Posterior vena cava (tissue), 2 donors: ENCODE measurements at regions of chr15 and their contacts with region 1.

Region 1: GRCh38 chr15:84826369-84826823 is 9.2 kb downstream of the ALPK3 start:
- DNase-seq: no peak

Region 2: DNA sequence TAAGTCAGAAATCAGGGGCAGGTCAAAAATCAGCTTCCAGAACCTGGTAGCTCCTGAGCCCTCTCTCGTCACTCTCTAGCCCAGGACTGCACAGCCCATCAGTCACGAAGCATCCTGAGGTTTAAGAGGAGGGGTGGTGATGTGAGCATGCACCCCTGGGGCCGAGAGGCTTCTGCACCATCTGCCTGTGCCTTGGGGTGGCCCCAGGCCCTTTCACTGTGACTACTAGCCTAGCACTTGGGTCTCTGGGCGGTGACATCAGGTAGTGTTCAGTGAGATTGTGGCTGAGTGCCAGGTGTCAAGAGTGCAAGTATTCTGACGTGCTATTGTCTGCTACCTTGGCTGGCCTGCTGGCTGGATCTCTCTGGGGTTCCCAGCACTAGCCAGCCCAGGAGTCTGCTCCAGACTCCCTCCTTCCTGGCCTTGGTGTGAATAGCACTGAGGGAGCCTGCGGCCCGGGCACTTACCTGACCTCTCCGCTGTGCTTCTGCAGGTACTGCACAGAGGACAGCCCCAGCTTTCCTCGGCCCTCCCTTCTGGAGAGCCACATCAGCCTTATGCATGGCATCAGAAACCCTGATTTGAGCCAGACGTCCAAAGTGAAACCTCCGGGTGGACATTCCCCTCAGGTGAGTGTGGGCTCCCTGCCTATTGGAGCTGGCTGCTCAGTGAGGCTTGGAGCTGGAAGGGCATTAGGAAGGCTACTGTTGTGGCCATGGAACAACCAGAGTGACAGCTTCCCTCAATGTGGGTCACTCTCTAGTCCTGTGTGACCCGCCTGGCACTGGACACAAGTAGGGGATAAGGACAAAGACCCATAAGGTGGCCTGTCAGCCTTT is 26.8 kb before region 1 on chr15:
- intact Hi-C with region 1: no loop called
- DNase-seq: no peak

Region 3: DNA sequence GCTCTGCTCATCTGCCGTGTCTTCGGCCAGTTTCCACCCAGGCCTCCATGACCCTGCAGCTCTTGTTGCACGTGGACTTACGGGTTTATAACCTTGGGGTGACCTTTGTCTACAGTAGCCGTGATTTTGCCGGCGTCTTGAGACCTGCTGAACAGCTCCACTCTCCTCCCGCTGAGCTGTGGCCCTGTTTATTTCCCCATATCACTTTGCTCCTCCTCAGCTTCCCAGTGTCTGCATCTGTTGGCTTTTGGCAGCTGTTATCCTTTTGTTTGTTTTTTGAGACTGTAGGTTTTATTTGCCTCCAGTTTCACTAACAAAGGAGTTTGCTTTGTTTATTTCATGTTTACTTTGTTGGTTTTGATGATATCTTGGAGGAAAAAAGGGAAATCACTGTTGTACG is 28.7 kb after region 1 on chr15:
- intact Hi-C with region 1: loop called in 1 of 2 experiments (anchors 1 kb)
- DNase-seq: no peak

Region 4: DNA sequence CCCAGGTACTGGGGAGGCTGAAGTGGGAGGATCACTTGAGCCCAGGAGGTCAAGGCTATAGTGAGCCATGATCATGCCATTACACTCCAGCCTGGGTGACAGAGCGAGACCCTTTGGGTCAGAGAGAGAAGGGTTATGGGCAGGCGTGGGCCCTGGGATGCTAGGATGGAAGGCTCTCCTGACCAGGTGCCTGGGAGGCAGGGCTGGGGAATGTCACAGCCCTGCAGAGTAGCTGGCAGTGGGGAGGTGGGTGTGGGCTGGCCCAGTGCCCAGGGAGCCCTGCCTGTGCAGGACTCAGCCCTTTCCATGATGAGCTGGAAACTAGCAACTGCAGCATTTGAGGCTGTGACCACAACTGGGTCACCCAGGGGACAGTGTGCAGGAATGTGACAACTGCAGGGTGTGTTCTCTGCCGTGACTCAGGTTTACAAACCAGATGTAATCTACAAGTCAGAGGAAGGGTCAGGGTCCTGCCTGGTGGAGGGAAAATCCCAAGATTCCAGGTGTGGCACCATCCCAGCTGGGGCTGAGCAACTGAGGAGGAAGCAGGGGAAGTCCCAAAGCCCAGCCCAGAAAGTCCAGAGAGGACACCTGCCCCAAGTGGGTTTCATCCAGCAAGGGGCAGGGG is 103.5 kb after region 1 on chr15:
- intact Hi-C with region 1: no loop called
- DNase-seq: peak; percentile 75